Endothelial cell of umbilical vein (primary cell): ENCODE measurements at regions of chr2 and their contacts with region 1.

Region 1: GRCh38 chr2:45494269-45494977 is 116.6 kb downstream of the SRBD1 start:
- DNase-seq: peak; percentile 78
- H3K4me3 ChIP-seq: no peak overlapping the region
- H3K27ac ChIP-seq: no peak overlapping the region
- H3K4me1 ChIP-seq: peaks cover 4% of the 10 kb centered on the region
- H3K27me3 ChIP-seq: no peaks in the 10 kb centered on the region
- CTCF ChIP-seq: peak; percentile 45
- POLR2A ChIP-seq: no peak

Region 2: GRCh38 chr2:44964752-44965236 is 529.6 kb before region 1 on chr2:
- CTCF ChIA-PET with region 1: interaction called, 11 read pairs
- POLR2A ChIA-PET with region 1: no interaction called
- dilution Hi-C with region 1: no loop called
- intact Hi-C with region 1: no loop called
- DNase-seq: no peak
- H3K4me3 ChIP-seq: no peak overlapping the region
- H3K27ac ChIP-seq: no peak overlapping the region
- H3K4me1 ChIP-seq: no peaks in the 10 kb centered on the region
- H3K27me3 ChIP-seq: peaks cover 11 to 17% of the 10 kb centered on the region in 2 experiments
- CTCF ChIP-seq: peak in 1 of 2 donors; percentile 33
- POLR2A ChIP-seq: no peak

Region 3: GRCh38 chr2:45009303-45009927 is 485.0 kb before region 1 on chr2 and contains the start of gene SIX2:
- CTCF ChIA-PET with region 1: interaction called, 13 read pairs
- POLR2A ChIA-PET with region 1: no interaction called
- dilution Hi-C with region 1: no loop called
- intact Hi-C with region 1: no loop called
- DNase-seq: peak; percentile 97
- H3K4me3 ChIP-seq: peak within 1 kb of the TSS; percentile 15 to 48 (median 38)
- H3K27ac ChIP-seq: no peak within 1 kb of the TSS
- H3K4me1 ChIP-seq: peaks cover 26% of the 10 kb centered on the region
- H3K27me3 ChIP-seq: peaks cover 62 to 85% of the 10 kb centered on the region in 2 experiments
- CTCF ChIP-seq: no peak
- POLR2A ChIP-seq: no peak
- total RNA-seq, gene SIX2: 0.24 and 0.32 TPM in 2 replicates

Region 4: GRCh38 chr2:45024600-45025291 is 469.7 kb before region 1 on chr2:
- CTCF ChIA-PET with region 1: interaction called, 40 read pairs
- POLR2A ChIA-PET with region 1: interaction called, 5 read pairs
- dilution Hi-C with region 1: no loop called
- intact Hi-C with region 1: loop called (anchors 1 kb)
- DNase-seq: peak; percentile 74
- H3K4me3 ChIP-seq: no peak overlapping the region
- H3K27ac ChIP-seq: peak overlapping the region; percentile 8
- H3K4me1 ChIP-seq: no peaks in the 10 kb centered on the region
- H3K27me3 ChIP-seq: peaks cover 2 to 6% of the 10 kb centered on the region in 2 experiments
- CTCF ChIP-seq: peak; percentile 4 to 28
- POLR2A ChIP-seq: no peak

Region 5: DNA sequence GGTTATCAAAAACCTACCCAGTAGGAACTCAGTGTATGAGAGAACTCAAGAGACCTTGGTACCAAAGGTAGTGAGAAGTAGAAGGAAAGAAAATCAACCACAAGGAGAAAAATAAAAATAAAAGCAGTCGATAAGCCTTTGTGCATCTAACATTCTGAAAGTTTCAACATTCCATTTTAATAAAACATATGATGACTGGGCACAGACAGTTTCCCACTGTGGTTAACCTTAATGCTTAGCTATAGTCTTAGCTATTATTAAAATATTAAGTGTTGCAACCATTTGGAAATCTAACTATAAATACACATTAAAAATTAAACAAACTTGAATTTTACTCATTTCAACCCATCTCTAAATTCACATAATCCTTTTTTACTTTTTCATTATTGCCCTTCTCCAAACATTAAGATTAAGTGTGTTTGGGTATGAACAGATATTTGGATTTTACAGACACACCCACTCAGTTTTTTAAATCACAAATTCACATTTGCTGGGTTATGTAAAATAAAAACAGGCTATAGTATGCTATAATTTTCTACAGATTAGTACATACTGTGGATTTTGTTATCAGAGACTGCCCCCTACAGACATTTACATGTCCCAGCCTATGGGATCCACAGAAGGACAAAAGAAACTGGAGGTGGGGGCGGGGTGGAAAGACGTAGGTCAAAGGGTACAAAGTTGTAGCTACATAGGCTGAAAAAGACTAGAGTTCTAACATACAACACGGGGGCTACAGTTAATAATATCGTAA is 83.8 kb after region 1 on chr2:
- CTCF ChIA-PET with region 1: interaction called, 28 read pairs
- POLR2A ChIA-PET with region 1: no interaction called
- dilution Hi-C with region 1: no loop called
- intact Hi-C with region 1: loop called (anchors 1 kb)
- DNase-seq: peak; percentile 67
- H3K4me3 ChIP-seq: no peak overlapping the region
- H3K27ac ChIP-seq: no peak overlapping the region
- H3K4me1 ChIP-seq: no peaks in the 10 kb centered on the region
- H3K27me3 ChIP-seq: no peaks in the 10 kb centered on the region
- CTCF ChIP-seq: peak; percentile 47 to 57
- POLR2A ChIP-seq: no peak

Region 6: GRCh38 chr2:45650851-45651414 is 156.5 kb after region 1 on chr2:
- CTCF ChIA-PET with region 1: no interaction called
- POLR2A ChIA-PET with region 1: no interaction called
- dilution Hi-C with region 1: no loop called
- intact Hi-C with region 1: no loop called
- DNase-seq: peak; percentile 96
- H3K4me3 ChIP-seq: peak overlapping the region; percentile 81 to 98 (median 88)
- H3K27ac ChIP-seq: peak overlapping the region; percentile 76
- H3K4me1 ChIP-seq: peaks cover 16% of the 10 kb centered on the region
- H3K27me3 ChIP-seq: no peaks in the 10 kb centered on the region
- CTCF ChIP-seq: peak; percentile 35 to 49
- POLR2A ChIP-seq: peak; percentile 86